Spleen (tissue), 13 donors: ENCODE measurements at regions of chr14 and their contacts with region 1.

Region 1: GRCh38 chr14:22598099-22598899 is at the start of gene ABHD4:
- DNase-seq: peak; percentile 96
- H3K4me3 ChIP-seq: peak within 1 kb of the TSS; percentile 59 to 94 (median 72)
- H3K27ac ChIP-seq: peak within 1 kb of the TSS; percentile 49 to 93 (median 88)
- H3K4me1 ChIP-seq: peaks cover 3 to 48% (median 30%) of the 10 kb centered on the region in 6 donors
- H3K27me3 ChIP-seq: no peaks in the 10 kb centered on the region
- CTCF ChIP-seq: no peak
- POLR2A ChIP-seq: peak in 1 of 3 donors; percentile 83
- total RNA-seq, gene ABHD4: 12.0 to 32.8 (median 24.9) TPM

Region 2: GRCh38 chr14:22545842-22546721 is 52.2 kb before region 1 on chr14:
- intact Hi-C with region 1: no loop called
- DNase-seq: no peak
- H3K4me3 ChIP-seq: peak overlapping the region in 2 of 8 donors; percentile 6 to 50
- H3K27ac ChIP-seq: peak overlapping the region; percentile 50 to 96 (median 84)
- H3K4me1 ChIP-seq: peaks cover 42 to 97% (median 81%) of the 10 kb centered on the region in 6 donors
- H3K27me3 ChIP-seq: no peaks in the 10 kb centered on the region
- CTCF ChIP-seq: no peak
- POLR2A ChIP-seq: no peak

Region 3: DNA sequence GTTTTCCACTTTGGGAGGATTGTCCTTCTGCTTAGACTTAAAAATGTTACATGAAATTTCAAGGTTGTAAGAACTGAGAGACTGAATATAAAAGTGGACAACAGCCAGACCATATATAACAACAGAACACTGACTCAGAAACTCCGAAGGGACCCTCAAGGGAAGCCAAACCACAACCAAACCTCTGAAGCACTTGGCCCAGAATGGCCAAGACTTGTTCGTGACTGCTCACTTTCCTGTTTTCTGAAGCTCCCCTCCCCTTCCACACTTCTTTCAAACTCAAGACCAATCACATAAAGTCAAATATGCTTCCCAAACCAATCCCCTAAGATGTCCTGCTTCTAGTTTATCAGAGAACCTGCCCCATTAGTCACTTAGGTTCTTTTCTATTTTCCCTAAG is 32.2 kb after region 1 on chr14:
- intact Hi-C with region 1: no loop called
- DNase-seq: no peak
- H3K4me3 ChIP-seq: no peak overlapping the region
- H3K27ac ChIP-seq: no peak overlapping the region
- H3K4me1 ChIP-seq: no peaks in the 10 kb centered on the region
- H3K27me3 ChIP-seq: no peaks in the 10 kb centered on the region
- CTCF ChIP-seq: no peak
- POLR2A ChIP-seq: no peak

Region 4: DNA sequence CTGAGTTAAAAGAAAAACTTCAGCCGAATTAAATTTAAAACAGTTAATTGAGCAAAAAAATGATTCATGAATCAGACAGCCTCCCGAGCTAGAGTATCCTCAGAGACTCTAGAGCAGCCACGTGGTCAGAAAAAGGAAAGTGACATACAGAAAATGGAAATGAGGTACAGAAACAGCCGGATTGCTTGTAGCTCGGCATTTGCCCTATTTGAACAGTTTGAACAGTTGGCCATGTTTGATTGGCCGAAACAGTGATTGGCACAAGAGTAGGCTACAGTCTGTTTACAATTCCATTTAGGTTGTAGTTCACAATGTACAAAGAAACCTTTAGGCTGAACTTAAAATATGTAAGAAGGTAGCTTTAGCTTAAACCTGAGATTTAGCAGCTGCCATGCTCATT is 155.3 kb after region 1 on chr14:
- intact Hi-C with region 1: loop called (anchors 10 kb)
- DNase-seq: no peak
- H3K4me3 ChIP-seq: no peak overlapping the region
- H3K27ac ChIP-seq: no peak overlapping the region
- H3K4me1 ChIP-seq: peaks cover under 1 to 9% (median 6%) of the 10 kb centered on the region in 6 donors
- H3K27me3 ChIP-seq: no peaks in the 10 kb centered on the region
- CTCF ChIP-seq: no peak
- POLR2A ChIP-seq: no peak